ENCODE measurements at regions of chr7 and their contacts with region 1.

Region 1: GRCh38 chr7:116173051-116174028 is 37.0 kb upstream of the TES start:
- DNase-seq: peak in 7 of 9 donors; percentile 27 to 69 (median 56)
- ATAC-seq: peak; percentile 74
- H3K4me3 ChIP-seq: no peak overlapping the region
- H3K4me3 Mint-ChIP-seq: no peak overlapping the region
- H3K27ac ChIP-seq: no peak overlapping the region
- H3K27ac Mint-ChIP-seq: no peak overlapping the region
- H3K4me1 ChIP-seq: no peaks in the 10 kb centered on the region
- H3K4me1 Mint-ChIP-seq: peaks cover 0 to 8% (median 0%) of the 10 kb centered on the region in 7 donors
- H3K27me3 ChIP-seq: no peaks in the 10 kb centered on the region
- H3K27me3 Mint-ChIP-seq: peaks cover 5 to 42% (median 8%) of the 10 kb centered on the region in 5 donors

Region 2: DNA sequence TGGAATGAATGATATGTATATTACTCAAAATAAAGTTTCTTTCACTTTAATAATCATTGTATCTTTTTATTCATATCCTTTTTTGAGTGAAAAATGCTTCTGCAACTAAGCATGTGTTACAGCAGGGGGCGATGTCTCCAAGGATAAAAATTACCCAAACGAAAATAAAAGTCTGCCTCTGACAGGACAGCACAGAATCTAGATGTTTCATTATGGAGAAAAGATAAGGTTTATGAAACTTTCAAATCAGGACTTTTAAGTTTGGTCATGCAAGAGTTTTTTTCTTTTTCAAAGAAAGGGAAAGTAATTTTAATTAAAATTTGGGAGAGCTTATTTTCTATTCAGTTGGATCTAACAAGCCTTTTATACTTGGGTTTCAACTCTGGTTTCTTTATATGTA is 85.4 kb after region 1 on chr7:
- CTCF ChIA-PET with region 1: interaction called, 6 read pairs
- POLR2A ChIA-PET with region 1: no interaction called
- intact Hi-C with region 1: loop called in 1 of 2 experiments (anchors 1 kb)
- DNase-seq: peak in 7 of 9 donors; percentile 14 to 45 (median 36)
- ATAC-seq: peak; percentile 82
- H3K4me3 ChIP-seq: no peak overlapping the region
- H3K4me3 Mint-ChIP-seq: no peak overlapping the region
- H3K27ac ChIP-seq: no peak overlapping the region
- H3K27ac Mint-ChIP-seq: peak overlapping the region in 7 of 9 donors; percentile 33 to 79 (median 49)
- H3K4me1 ChIP-seq: no peaks in the 10 kb centered on the region
- H3K4me1 Mint-ChIP-seq: peaks cover 10 to 26% (median 15%) of the 10 kb centered on the region in 7 donors
- H3K27me3 ChIP-seq: no peaks in the 10 kb centered on the region
- H3K27me3 Mint-ChIP-seq: peaks cover 0 to 5% (median 0%) of the 10 kb centered on the region in 5 donors

Region 3: DNA sequence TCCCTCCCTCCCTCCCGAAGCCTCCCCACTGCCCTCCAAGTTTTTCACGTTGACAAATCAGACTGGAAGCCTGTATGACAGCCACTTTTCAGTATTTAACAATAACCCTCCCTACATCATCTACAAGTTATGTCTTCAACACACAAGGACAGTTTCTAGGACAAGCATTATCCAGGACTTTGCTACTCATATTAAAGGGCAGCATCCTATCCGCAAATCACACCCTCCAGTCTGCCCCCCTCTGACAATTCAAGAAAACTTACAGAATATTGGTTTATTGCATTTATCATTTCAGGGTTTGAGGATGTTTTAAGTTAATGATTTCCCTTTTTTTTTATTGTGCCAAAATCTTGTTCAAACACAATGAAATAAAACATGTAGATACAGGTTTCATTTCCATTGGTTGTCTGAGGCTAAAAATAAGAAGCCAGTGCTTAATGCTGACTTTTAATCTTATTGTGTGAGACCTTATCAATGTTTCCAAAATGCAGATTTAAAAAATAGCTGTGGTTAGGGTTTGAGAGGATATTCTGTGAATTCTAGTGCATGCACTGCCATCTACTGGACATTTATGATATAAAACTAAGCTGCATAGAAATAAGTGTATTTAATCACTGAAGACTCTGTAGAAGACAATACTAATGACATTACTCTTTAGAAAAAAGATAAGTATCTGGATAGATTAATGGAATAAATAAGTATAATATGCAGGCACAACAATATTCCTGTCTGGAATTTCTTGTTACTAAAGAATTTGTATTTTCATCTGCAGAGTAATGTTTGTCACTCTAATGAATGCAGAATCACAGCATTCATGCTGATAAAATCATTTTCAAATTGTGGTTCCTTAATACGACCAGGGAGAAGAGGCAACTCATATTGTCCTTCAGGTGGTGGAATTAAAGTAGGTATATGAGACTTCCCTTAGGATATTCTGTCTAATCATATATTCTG is 415.6 kb after region 1 on chr7:
- CTCF ChIA-PET with region 1: interaction called, 28 read pairs
- POLR2A ChIA-PET with region 1: no interaction called
- intact Hi-C with region 1: loop called (anchors 1 kb)
- DNase-seq: peak in 5 of 9 donors; percentile 22 to 40 (median 32)
- ATAC-seq: peak; percentile 69
- H3K4me3 ChIP-seq: no peak overlapping the region
- H3K4me3 Mint-ChIP-seq: no peak overlapping the region
- H3K27ac ChIP-seq: no peak overlapping the region
- H3K27ac Mint-ChIP-seq: no peak overlapping the region
- H3K4me1 ChIP-seq: no peaks in the 10 kb centered on the region
- H3K4me1 Mint-ChIP-seq: peaks cover 15 to 27% (median 19%) of the 10 kb centered on the region in 7 donors
- H3K27me3 ChIP-seq: no peaks in the 10 kb centered on the region
- H3K27me3 Mint-ChIP-seq: peaks cover 22 to 32% (median 26%) of the 10 kb centered on the region in 5 donors

Region 4: DNA sequence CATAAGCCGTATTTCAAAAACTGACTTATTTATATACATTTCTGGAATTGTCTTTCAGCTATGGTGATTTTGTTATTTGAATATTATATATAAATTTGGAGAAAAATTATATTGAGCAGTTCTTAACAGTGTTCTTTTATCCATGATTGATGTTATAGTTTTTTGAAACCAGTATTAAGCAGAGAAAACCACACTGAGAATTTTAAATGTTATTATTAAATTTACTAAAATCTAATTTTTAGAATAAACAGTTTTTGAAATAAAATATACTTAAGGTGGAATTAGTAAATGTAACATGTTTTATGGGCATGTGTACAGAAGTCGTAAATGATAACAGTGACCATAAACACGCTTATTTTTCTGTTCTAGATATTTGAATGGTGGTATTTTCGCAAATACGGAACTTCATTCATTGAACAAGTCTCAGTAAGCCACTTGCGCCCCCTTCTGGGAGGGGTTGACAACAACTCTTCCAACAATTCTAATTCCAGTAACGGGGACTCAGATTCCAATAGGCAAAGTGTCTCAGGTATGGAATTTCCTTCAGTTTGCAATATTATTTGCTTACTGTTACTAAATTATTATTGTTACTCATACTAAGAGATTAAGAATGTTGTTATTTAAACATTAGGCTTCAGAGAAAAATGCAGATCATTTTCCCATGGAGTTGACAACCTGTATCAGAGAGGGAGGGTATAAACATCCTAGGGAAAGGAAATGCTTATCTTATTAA is 946.0 kb after region 1 on chr7:
- CTCF ChIA-PET with region 1: no interaction called
- POLR2A ChIA-PET with region 1: no interaction called
- intact Hi-C with region 1: loop called in 1 of 2 experiments (anchors 1 kb)
- DNase-seq: peak; percentile 43 to 78 (median 69)
- ATAC-seq: peak; percentile 78
- H3K4me3 ChIP-seq: no peak overlapping the region
- H3K4me3 Mint-ChIP-seq: no peak overlapping the region
- H3K27ac ChIP-seq: no peak overlapping the region
- H3K27ac Mint-ChIP-seq: no peak overlapping the region
- H3K4me1 ChIP-seq: no peaks in the 10 kb centered on the region
- H3K4me1 Mint-ChIP-seq: no peaks in the 10 kb centered on the region
- H3K27me3 ChIP-seq: no peaks in the 10 kb centered on the region
- H3K27me3 Mint-ChIP-seq: peaks cover 0 to 27% (median 0%) of the 10 kb centered on the region in 5 donors

Region 5: DNA sequence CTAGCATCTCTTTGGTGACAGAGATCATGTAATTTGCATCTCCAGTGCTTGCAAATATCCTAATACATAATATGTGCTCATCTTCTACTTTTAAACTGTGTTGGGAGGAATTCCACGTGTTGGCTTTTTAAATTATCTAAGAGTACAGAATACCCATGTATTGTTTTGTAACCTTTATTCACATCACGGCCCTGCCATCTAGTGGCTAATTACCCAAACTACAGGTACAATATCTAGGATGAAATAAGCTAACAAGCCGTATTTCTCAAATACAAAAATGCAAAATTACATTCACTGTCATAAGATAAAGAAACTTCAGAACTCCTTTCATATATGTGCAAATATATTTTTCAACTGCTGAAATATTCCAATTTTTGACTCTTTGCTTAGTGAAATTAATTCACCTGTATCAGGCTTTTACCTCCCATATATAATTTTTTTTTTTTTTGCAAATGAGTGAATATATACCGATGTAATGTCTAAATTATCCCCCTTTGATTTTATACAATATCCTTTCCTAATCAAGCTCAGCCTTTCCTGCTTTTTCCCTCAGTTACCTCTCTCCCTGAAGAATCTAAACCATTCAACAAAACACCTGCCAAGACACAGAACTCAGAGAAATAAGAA is 1980.3 kb after region 1 on chr7:
- CTCF ChIA-PET with region 1: no interaction called
- POLR2A ChIA-PET with region 1: no interaction called
- intact Hi-C with region 1: loop called in 1 of 2 experiments (anchors 5 kb)
- DNase-seq: peak in 6 of 9 donors; percentile 4 to 34 (median 24)
- ATAC-seq: peak; percentile 70
- H3K4me3 ChIP-seq: no peak overlapping the region
- H3K4me3 Mint-ChIP-seq: no peak overlapping the region
- H3K27ac ChIP-seq: no peak overlapping the region
- H3K27ac Mint-ChIP-seq: no peak overlapping the region
- H3K4me1 ChIP-seq: no peaks in the 10 kb centered on the region
- H3K4me1 Mint-ChIP-seq: no peaks in the 10 kb centered on the region
- H3K27me3 ChIP-seq: peaks cover 0 to 3% of the 10 kb centered on the region in 2 donors
- H3K27me3 Mint-ChIP-seq: peaks cover 10 to 36% (median 23%) of the 10 kb centered on the region in 5 donors

Measured in naive thymus-derived CD4-positive, alpha-beta T cell (primary cell).